HCT116 (cell line): ENCODE measurements at regions of chr15 and their contacts with region 1.

Region 1: DNA sequence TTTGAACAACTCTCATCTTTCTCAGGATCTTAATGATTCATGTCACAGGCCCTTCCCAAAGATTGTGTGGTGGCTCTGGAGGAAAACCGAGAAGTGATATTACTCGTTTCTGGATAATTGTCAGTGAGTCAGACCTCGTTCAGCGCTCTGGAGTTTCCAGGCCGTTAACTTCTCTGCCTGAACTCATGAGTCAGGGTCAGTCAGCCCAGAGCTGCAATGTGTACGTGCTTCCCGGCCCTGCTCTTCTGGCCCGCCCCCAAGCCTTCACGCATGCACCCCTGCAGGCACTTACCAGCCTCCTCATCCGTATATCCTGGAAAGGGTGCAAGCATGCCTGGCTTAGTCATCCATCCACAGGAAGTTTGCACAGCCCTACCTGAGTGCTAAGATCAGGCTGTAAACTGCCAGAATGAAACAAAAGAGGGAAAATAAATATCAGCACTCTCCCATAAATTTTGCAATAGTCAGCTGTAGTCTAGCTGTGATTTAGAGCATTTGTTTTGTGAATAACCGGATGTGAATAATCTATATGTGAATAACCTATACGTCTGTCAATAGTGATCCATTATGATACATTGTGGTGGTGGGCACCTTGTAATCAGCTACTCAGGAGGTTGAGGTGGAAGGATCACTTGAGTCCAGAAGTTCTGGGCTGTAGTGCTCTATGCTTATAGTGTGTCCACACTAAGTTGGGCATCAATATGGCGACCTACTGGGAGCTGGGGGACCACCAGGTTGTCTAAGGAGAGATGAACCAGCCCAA is 35.3 kb upstream of the SEMA4B start:
- DNase-seq: peak; percentile 98
- ATAC-seq: peak; percentile 98
- H3K4me3 ChIP-seq: peak overlapping the region in 1 of 2 experiments; percentile 32; a peak in 3 of 4 replicates
- H3K27ac ChIP-seq: peak overlapping the region; percentile 90
- H3K4me1 ChIP-seq: peaks cover 31 to 74% of the 10 kb centered on the region in 2 experiments
- H3K27me3 ChIP-seq: no peaks in the 10 kb centered on the region
- CTCF ChIP-seq: no peak
- POLR2A ChIP-seq: no peak
- RAD21 ChIP-seq: no peak

Region 2: DNA sequence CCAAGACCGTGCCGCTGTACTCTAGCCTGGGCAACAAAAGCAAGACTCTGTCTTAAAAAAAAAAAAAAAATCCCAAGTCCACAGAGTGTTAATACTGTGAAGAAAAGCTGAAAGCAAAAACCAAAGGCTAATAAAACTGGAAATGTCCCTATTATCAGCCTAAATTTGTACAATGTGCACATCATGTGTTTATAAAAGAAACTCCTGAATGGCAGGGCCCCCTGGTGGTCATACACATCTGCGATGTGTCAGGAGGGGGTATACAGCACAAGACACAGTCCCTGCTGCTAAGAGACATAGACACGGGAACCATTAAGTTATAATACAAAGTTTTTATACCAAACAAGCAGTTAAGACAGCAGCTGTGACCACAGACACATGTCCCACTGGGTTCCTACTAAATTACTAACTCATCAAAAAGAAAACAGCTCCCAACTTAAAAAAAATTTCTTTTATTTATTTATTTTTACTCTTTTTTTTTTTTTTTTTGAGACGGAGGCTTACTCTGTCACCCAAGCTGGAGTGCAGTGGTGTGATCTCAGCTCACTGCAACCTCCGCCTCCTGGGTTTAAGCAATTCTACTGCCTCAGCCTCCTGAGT is 94.5 kb before region 1 on chr15:
- CTCF ChIA-PET with region 1: no interaction called
- POLR2A ChIA-PET with region 1: no interaction called
- RAD21 ChIA-PET with region 1: no interaction called
- intact Hi-C with region 1: no loop called
- DNase-seq: peak; percentile 57
- ATAC-seq: peak; percentile 81
- H3K4me3 ChIP-seq: no peak overlapping the region
- H3K27ac ChIP-seq: no peak overlapping the region
- H3K4me1 ChIP-seq: peaks cover 16% of the 10 kb centered on the region in 2 experiments
- H3K27me3 ChIP-seq: no peaks in the 10 kb centered on the region
- CTCF ChIP-seq: peak; percentile 80 to 84 (median 83); a peak in 5 of 6 replicates
- POLR2A ChIP-seq: no peak
- RAD21 ChIP-seq: peak; percentile 88

Region 3: DNA sequence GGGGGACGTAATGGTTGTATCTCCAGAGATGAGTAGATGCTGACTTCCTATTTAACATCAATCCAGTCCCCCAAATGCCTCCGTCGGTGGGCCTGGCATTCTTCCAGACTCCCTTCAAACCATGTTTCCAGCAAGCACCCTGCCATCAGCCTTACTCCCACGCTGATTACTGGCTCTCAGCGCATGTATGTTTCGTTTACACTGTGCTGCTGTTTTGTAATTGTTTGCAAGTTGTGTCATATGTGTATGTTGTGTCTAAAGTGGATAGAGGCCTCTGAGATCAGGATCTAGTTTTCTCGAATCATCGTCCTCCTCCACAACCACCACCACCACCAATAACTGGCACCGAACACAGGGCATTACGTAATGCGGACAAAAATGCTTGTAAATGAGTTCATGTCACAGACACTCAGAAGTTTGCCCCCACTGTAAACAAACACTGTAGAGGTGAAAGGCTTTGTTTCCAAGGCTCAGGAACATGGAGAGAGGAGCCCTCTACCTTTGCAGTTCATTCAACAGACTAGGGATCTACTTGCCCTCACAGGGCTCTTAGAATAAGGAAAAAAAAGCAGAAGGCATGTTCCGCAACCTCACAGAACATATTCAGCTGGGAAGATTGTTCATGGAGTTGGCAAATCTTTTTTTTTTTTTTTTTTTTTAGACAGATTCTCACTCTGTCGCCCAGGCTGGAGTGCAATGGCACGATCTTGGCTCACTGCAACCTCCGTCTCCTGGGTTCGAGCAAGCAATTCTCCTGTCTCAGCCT is 10.8 kb before region 1 on chr15:
- CTCF ChIA-PET with region 1: no interaction called
- POLR2A ChIA-PET with region 1: no interaction called
- RAD21 ChIA-PET with region 1: no interaction called
- intact Hi-C with region 1: no loop called
- DNase-seq: no peak
- ATAC-seq: no peak
- H3K4me3 ChIP-seq: no peak overlapping the region
- H3K27ac ChIP-seq: no peak overlapping the region
- H3K4me1 ChIP-seq: peaks cover 14 to 26% of the 10 kb centered on the region in 2 experiments
- H3K27me3 ChIP-seq: no peaks in the 10 kb centered on the region
- CTCF ChIP-seq: no peak
- POLR2A ChIP-seq: no peak
- RAD21 ChIP-seq: no peak

Region 4: GRCh38 chr15:90214553-90215196 is 48.8 kb after region 1 on chr15:
- CTCF ChIA-PET with region 1: interaction called, 6 read pairs
- POLR2A ChIA-PET with region 1: no interaction called
- RAD21 ChIA-PET with region 1: interaction called in 1 of 2 experiments, 5 read pairs
- intact Hi-C with region 1: loop called (anchors 1 kb)
- DNase-seq: no peak
- ATAC-seq: no peak
- H3K4me3 ChIP-seq: no peak overlapping the region
- H3K27ac ChIP-seq: peak overlapping the region; percentile 99
- H3K4me1 ChIP-seq: peaks cover 53 to 67% of the 10 kb centered on the region in 2 experiments
- H3K27me3 ChIP-seq: no peaks in the 10 kb centered on the region
- CTCF ChIP-seq: peak in 2 of 3 experiments; percentile 51 to 54; a peak in 4 of 6 replicates
- POLR2A ChIP-seq: no peak
- RAD21 ChIP-seq: no peak